Natural killer cell (primary cell): ENCODE measurements at regions of chr2 and their contacts with region 1.

Region 1: DNA sequence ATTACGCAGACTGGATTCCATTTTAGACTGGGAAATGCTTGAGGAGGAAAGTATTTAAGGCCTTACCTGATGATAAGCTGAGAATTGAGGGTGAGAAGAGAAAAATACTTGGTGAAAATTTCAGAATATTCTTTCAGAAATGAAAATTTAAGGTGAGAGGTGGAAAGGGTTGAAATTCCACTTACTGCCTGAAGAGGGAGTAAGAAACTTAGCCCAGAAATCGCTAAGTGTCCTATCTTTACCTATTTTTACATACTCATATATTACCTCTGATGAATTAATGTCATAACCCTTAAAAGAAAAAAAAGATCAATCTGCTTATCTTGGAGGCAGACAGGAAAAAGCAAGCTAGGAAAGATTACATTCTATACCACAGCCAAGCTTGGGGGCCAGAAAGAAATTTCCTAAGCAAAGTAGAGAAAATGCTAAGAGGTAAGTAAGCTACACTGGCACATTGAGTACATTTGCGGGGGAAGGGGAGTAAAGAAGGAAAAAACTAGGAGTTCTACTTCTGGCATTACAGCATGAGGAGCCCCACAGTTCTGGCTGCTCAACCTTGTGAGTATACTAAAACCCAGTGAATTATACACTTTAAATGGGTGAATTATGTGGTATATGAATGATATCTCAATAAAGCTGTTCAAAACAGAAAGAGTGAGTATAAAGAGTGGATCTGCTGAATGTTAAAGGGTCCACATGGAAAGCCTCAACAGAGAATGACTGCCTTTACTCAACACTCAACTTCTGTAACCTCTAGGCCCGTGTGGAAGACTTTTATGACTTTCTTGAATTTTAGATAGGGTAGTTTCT is 33.8 kb downstream of the SMC6 start:
- DNase-seq: peak in 1 of 2 donors; percentile 43
- ATAC-seq: peak in 1 of 3 donors; percentile 55
- H3K4me3 ChIP-seq: no peak overlapping the region
- H3K4me3 Mint-ChIP-seq: no peak overlapping the region
- H3K27ac ChIP-seq: no peak overlapping the region
- H3K27ac Mint-ChIP-seq: no peak overlapping the region
- H3K4me1 ChIP-seq: no peaks in the 10 kb centered on the region
- H3K4me1 Mint-ChIP-seq: no peaks in the 10 kb centered on the region
- H3K27me3 ChIP-seq: no peaks in the 10 kb centered on the region
- H3K27me3 Mint-ChIP-seq: no peaks in the 10 kb centered on the region
- CTCF ChIP-seq: peak; percentile 89

Region 2: GRCh38 chr2:17388798-17389197 is 331.0 kb before region 1 on chr2:
- intact Hi-C with region 1: no loop called
- DNase-seq: no peak
- ATAC-seq: no peak
- H3K4me3 ChIP-seq: no peak overlapping the region
- H3K4me3 Mint-ChIP-seq: no peak overlapping the region
- H3K27ac ChIP-seq: no peak overlapping the region
- H3K27ac Mint-ChIP-seq: no peak overlapping the region
- H3K4me1 ChIP-seq: no peaks in the 10 kb centered on the region
- H3K4me1 Mint-ChIP-seq: no peaks in the 10 kb centered on the region
- H3K27me3 ChIP-seq: no peaks in the 10 kb centered on the region
- H3K27me3 Mint-ChIP-seq: no peaks in the 10 kb centered on the region
- CTCF ChIP-seq: no peak

Region 3: GRCh38 chr2:17672583-17673317 is 47.0 kb before region 1 on chr2:
- intact Hi-C with region 1: no loop called
- DNase-seq: no peak
- ATAC-seq: no peak
- H3K4me3 ChIP-seq: no peak overlapping the region
- H3K4me3 Mint-ChIP-seq: no peak overlapping the region
- H3K27ac ChIP-seq: no peak overlapping the region
- H3K27ac Mint-ChIP-seq: no peak overlapping the region
- H3K4me1 ChIP-seq: no peaks in the 10 kb centered on the region
- H3K4me1 Mint-ChIP-seq: no peaks in the 10 kb centered on the region
- H3K27me3 ChIP-seq: no peaks in the 10 kb centered on the region
- H3K27me3 Mint-ChIP-seq: no peaks in the 10 kb centered on the region
- CTCF ChIP-seq: no peak

Region 4: DNA sequence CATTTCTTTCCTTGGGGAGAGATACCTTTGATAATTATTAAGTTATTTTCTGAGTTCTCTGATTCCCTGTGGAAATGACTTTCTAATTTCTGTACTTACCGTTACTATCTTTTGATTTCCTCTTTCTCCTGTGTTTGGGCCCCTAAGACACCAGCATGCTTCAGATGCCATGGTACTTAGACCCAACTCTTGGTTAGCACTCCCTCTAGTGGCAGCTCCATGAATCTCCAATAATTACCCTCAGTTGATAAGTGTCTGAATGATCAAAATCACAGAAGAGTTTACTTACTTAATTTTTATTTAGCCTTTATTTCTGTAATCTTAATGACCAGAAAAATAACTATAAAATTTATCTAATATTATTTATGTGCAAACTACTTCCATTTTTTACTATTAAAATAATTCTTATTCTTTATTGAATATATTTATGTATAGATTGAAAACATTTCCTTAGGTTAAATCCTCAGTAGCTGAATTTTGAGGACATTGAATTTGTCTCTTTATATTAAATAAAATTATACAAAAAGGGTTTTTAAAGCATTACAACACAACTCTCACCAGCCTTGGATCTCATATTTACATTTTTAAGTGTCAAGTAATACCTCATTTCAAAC is 459.1 kb after region 1 on chr2:
- intact Hi-C with region 1: loop called (anchors 5 kb)
- DNase-seq: peak in 1 of 2 donors; percentile 58
- ATAC-seq: peak in 2 of 3 donors; percentile 52 to 60
- H3K4me3 ChIP-seq: no peak overlapping the region
- H3K4me3 Mint-ChIP-seq: no peak overlapping the region
- H3K27ac ChIP-seq: no peak overlapping the region
- H3K27ac Mint-ChIP-seq: no peak overlapping the region
- H3K4me1 ChIP-seq: no peaks in the 10 kb centered on the region
- H3K4me1 Mint-ChIP-seq: no peaks in the 10 kb centered on the region
- H3K27me3 ChIP-seq: no peaks in the 10 kb centered on the region
- H3K27me3 Mint-ChIP-seq: no peaks in the 10 kb centered on the region
- CTCF ChIP-seq: peak; percentile 59